ENCODE measurements at regions of chr2 and their contacts with region 1.

Region 1: DNA sequence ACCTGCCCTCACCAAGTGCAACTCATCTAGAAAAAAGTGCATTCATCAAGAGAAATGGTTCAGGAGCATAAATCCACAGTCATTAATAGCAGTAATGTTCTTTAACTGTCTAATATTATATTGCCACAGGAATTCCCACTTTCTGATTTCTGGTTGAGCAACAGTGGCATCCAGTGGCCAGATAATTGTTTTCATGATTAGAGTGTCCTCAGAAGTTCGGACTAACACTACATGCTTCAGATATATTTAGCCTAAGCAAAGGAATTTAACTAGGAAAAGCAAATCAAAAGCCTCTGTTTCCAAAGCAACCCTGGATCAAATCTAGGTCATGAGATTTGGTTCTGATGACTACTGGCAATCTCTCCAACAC is 9.8 kb upstream of the ERBB4 start:
- DNase-seq: no peak
- H3K4me3 ChIP-seq: no peak overlapping the region
- H3K27ac ChIP-seq: no peak overlapping the region
- H3K4me1 ChIP-seq: no peaks in the 10 kb centered on the region
- H3K27me3 ChIP-seq: peaks cover 3% of the 10 kb centered on the region
- CTCF ChIP-seq: peak; percentile 32 to 53

Region 2: GRCh38 chr2:211455216-211455841 is 1093.1 kb before region 1 on chr2:
- CTCF ChIA-PET with region 1: no interaction called
- dilution Hi-C with region 1: no loop called
- in situ Hi-C with region 1: loop called in 1 of 2 experiments (anchors 25 kb)
- intact Hi-C with region 1: no loop called
- DNase-seq: peak; percentile 24
- H3K4me3 ChIP-seq: no peak overlapping the region
- H3K27ac ChIP-seq: no peak overlapping the region
- H3K4me1 ChIP-seq: no peaks in the 10 kb centered on the region
- H3K27me3 ChIP-seq: no peaks in the 10 kb centered on the region
- CTCF ChIP-seq: peak; percentile 94 to 97

Region 3: GRCh38 chr2:211745295-211746097 is 802.9 kb before region 1 on chr2:
- CTCF ChIA-PET with region 1: no interaction called
- dilution Hi-C with region 1: no loop called
- in situ Hi-C with region 1: loop called in 1 of 2 experiments (anchors 25 kb)
- intact Hi-C with region 1: loop called (anchors 1 kb)
- DNase-seq: peak; percentile 45
- H3K4me3 ChIP-seq: no peak overlapping the region
- H3K27ac ChIP-seq: no peak overlapping the region
- H3K4me1 ChIP-seq: no peaks in the 10 kb centered on the region
- H3K27me3 ChIP-seq: no peaks in the 10 kb centered on the region
- CTCF ChIP-seq: peak; percentile 89 to 96

Region 4: DNA sequence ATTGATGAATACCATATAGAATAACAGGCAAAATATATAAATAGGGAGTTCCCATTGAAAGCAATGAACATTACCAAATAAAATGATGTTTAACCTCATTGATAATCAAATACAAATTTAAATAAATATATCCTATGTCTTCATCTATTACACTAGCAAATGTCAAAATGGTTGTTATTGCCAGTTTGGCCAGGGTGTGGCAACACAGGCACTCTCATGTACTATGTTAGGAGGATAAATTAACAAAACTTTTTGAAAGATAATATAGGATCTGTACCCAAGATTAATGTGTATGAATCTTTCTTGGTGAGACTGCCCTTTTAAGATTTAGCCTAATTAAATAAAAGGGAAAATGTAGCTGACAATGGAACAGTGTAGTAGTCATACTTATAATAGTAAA is 669.1 kb before region 1 on chr2:
- CTCF ChIA-PET with region 1: no interaction called
- dilution Hi-C with region 1: no loop called
- in situ Hi-C with region 1: loop called in 1 of 2 experiments (anchors 25 kb)
- intact Hi-C with region 1: loop called (anchors 10 kb)
- DNase-seq: no peak
- H3K4me3 ChIP-seq: no peak overlapping the region
- H3K27ac ChIP-seq: no peak overlapping the region
- H3K4me1 ChIP-seq: no peaks in the 10 kb centered on the region
- H3K27me3 ChIP-seq: no peaks in the 10 kb centered on the region
- CTCF ChIP-seq: peak; percentile 27 to 54

Region 5: GRCh38 chr2:212451786-212452231 is 96.6 kb before region 1 on chr2:
- CTCF ChIA-PET with region 1: no interaction called
- dilution Hi-C with region 1: no loop called
- in situ Hi-C with region 1: no loop called
- intact Hi-C with region 1: no loop called
- DNase-seq: peak; percentile 72
- H3K4me3 ChIP-seq: no peak overlapping the region
- H3K27ac ChIP-seq: peak overlapping the region; percentile 11
- H3K4me1 ChIP-seq: peaks cover 2% of the 10 kb centered on the region
- H3K27me3 ChIP-seq: no peaks in the 10 kb centered on the region
- CTCF ChIP-seq: no peak